ENCODE measurements at regions of chr22 and their contacts with region 1.

Region 1: DNA sequence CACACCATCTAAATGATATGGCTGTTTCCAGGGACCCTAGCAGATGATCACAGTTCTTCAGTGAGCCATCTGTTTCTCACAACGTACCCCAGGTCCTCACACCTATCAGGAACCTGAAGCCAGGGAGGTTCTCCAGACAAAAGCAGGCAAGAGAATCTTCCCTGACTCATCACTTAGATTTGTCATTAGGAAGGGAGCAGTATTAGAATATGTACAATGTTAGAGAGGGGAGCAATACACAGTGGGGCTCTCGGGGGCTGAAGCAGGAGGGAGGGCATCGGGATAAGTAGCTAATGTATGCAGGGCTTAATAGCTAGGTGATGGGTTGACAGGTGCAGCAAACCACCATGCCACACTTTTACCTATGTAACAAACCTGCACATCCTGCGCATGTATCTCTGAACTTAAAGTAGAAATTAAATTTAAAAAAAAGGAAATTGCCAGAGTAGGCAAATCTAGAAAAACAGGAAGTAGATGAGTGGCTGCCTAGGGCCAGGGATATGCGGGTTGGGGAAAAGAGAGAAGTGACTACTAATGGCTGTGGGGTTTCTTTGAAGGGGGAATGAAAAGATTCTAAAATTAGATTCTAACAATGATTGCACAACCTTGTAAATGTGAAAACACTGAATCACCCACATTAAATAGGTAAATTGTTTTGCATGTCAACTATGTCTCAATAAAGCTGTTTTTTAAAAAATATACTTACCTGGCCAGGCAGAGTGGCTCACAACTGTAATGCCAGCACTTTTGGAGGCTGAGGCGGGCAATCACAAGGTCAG is 14.4 kb downstream of the C22orf42 start:
- H3K4me3 Mint-ChIP-seq: no peak overlapping the region
- H3K27ac Mint-ChIP-seq: peak overlapping the region; percentile 55
- H3K4me1 Mint-ChIP-seq: peaks cover 56% of the 10 kb centered on the region
- H3K27me3 Mint-ChIP-seq: no peaks in the 10 kb centered on the region

Region 2: DNA sequence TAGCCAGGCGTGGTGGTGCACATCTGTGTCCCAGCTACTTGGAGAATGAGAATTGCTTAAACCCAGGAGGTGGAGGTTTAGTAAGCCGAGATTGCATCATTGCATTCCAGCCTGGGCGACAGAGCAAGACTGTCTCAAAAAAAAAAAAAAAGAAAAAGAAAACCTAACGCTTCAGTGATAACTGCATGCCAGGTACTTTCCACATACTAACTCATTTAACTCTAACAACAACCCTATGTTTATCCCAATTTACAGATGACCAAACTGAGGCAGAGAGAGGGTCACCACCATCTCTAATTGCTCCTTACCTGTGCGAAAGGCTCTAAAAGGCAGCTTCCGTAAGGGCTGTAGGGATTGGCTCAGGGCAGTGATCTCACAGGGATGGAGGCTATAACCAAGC is 494.3 kb before region 1 on chr22:
- intact Hi-C with region 1: no loop called
- H3K4me3 Mint-ChIP-seq: no peak overlapping the region
- H3K27ac Mint-ChIP-seq: no peak overlapping the region
- H3K4me1 Mint-ChIP-seq: peaks cover 37% of the 10 kb centered on the region
- H3K27me3 Mint-ChIP-seq: no peaks in the 10 kb centered on the region

Region 3: GRCh38 chr22:32218470-32218869 is 73.8 kb after region 1 on chr22:
- intact Hi-C with region 1: loop called (anchors 10 kb)
- H3K4me3 Mint-ChIP-seq: no peak overlapping the region
- H3K27ac Mint-ChIP-seq: peak overlapping the region; percentile 67
- H3K4me1 Mint-ChIP-seq: peaks cover 27% of the 10 kb centered on the region
- H3K27me3 Mint-ChIP-seq: no peaks in the 10 kb centered on the region